GM12878 (cell line): ENCODE measurements at regions of chr6 and their contacts with region 1.

Region 1: DNA sequence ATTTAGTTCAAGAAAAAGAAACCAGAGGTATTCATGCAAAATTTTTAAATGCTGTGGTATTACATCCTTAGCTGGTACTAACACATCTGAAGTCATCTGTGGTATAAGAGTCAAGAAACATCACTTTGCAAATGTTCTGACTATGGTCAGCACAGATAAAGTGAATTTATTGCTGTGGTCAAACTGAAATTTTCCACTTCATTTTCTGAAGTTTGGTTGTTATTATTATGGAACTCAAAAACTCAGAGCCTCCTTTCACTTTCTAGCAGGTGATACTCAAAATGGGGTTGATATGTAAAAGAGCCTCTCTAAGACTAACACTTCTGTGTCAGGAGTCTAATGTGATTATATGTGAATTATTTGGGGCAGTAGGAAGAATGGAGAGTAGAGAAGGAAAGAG is 257.8 kb downstream of the RNGTT start:
- DNase-seq: peak; percentile 81
- ATAC-seq: peak; percentile 96
- H3K4me3 ChIP-seq: no peak overlapping the region
- H3K27ac ChIP-seq: peak overlapping the region; percentile 53; the same call in 1 of the 2 replicates
- H3K4me1 ChIP-seq: peaks cover 22% of the 10 kb centered on the region; the same call in 1 of the 2 replicates
- H3K27me3 ChIP-seq: no peaks in the 10 kb centered on the region
- CTCF ChIP-seq: no peak
- EP300 ChIP-seq: peak; percentile 78 to 85
- POLR2A ChIP-seq: no peak
- RAD21 ChIP-seq: 0 out of 2 replicates have a peak, but pooled peaks have one; percentile 2

Region 2: GRCh38 chr6:88725111-88725975 is 19.7 kb after region 1 on chr6:
- CTCF ChIA-PET with region 1: interaction called, 4 read pairs
- POLR2A ChIA-PET with region 1: no interaction called
- RAD21 ChIA-PET with region 1: interaction called, 3 read pairs
- SMC1A ChIA-PET with region 1: interaction called, 14 read pairs
- in situ Hi-C with region 1: no loop called
- intact Hi-C with region 1: no loop called
- DNase-seq: peak; percentile 26
- ATAC-seq: peak; percentile 42
- H3K4me3 ChIP-seq: no peak overlapping the region
- H3K27ac ChIP-seq: peak overlapping the region; percentile 30; the same call in 1 of the 2 replicates
- H3K4me1 ChIP-seq: no peaks in the 10 kb centered on the region; the same call in 1 of the 2 replicates
- H3K27me3 ChIP-seq: no peaks in the 10 kb centered on the region
- CTCF ChIP-seq: no peak
- EP300 ChIP-seq: no peak
- POLR2A ChIP-seq: no peak
- RAD21 ChIP-seq: 0 out of 2 replicates have a peak, but pooled peaks have one; percentile 6